Activated naive CD8-positive, alpha-beta T cell treated with anti-CD3 and anti-CD28 coated beads, Interleukin-2, amount 10 ng/mL, durations not matched to agents 7 days and 5 days (primary cell): ENCODE measurements at regions of chr6 and their contacts with region 1.

Region 1: GRCh38 chr6:26532699-26533531 is 5.3 kb upstream of the HMGN4 start:
- DNase-seq: peak; percentile 80
- ATAC-seq: peak; percentile 20
- H3K4me3 Mint-ChIP-seq: peak overlapping the region; percentile 98
- H3K27ac Mint-ChIP-seq: peak overlapping the region; percentile 96
- H3K4me1 Mint-ChIP-seq: peaks cover 35% of the 10 kb centered on the region
- H3K27me3 Mint-ChIP-seq: no peaks in the 10 kb centered on the region

Region 2: DNA sequence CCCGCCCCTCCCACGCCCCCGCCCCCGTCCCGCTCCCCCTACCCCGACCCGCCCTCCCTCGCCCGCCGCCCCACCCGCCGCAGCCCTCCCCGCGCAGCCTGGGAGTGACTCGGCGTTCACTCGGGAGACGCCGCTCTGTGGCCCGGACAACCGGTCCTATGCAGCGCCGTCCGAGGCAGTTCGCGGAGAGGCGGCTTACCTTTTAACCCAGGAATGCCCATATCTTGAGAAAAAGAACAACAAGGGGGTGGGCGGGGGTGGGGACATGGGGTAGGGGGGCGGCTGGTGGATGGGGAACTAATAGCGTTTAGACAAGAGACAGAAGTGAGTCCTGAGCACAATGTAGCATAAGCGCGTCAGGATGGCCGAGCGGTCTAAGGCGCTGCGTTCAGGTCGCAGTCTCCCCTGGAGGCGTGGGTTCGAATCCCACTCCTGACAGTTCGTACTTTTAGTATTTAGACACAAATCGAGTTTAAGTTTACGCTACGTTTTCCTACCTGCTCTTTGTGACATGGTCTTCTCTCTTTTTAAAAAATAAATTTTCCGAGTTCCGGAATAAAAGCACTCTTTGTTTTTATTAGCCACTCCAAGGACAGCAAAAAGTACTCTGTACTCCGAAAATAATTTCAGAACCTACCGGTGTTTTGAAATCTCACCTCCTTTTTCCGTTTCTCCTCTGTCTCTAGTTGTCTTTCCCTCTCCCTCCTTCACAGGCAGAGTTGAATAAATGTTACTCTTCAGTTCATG is 11.9 kb before region 1 on chr6:
- POLR2A ChIA-PET with region 1: interaction called, 17 read pairs
- DNase-seq: peak; percentile 83
- ATAC-seq: peak; percentile 85
- H3K4me3 Mint-ChIP-seq: peak overlapping the region; percentile 77
- H3K27ac Mint-ChIP-seq: peak overlapping the region; percentile 76
- H3K4me1 Mint-ChIP-seq: peaks cover 21% of the 10 kb centered on the region
- H3K27me3 Mint-ChIP-seq: no peaks in the 10 kb centered on the region

Region 3: GRCh38 chr6:26629359-26629758 is 96.4 kb after region 1 on chr6:
- POLR2A ChIA-PET with region 1: no interaction called
- DNase-seq: no peak
- ATAC-seq: no peak
- H3K4me3 Mint-ChIP-seq: no peak overlapping the region
- H3K27ac Mint-ChIP-seq: no peak overlapping the region
- H3K4me1 Mint-ChIP-seq: no peaks in the 10 kb centered on the region
- H3K27me3 Mint-ChIP-seq: no peaks in the 10 kb centered on the region